ENCODE measurements at regions of chr7 and their contacts with region 1.

Region 1: DNA sequence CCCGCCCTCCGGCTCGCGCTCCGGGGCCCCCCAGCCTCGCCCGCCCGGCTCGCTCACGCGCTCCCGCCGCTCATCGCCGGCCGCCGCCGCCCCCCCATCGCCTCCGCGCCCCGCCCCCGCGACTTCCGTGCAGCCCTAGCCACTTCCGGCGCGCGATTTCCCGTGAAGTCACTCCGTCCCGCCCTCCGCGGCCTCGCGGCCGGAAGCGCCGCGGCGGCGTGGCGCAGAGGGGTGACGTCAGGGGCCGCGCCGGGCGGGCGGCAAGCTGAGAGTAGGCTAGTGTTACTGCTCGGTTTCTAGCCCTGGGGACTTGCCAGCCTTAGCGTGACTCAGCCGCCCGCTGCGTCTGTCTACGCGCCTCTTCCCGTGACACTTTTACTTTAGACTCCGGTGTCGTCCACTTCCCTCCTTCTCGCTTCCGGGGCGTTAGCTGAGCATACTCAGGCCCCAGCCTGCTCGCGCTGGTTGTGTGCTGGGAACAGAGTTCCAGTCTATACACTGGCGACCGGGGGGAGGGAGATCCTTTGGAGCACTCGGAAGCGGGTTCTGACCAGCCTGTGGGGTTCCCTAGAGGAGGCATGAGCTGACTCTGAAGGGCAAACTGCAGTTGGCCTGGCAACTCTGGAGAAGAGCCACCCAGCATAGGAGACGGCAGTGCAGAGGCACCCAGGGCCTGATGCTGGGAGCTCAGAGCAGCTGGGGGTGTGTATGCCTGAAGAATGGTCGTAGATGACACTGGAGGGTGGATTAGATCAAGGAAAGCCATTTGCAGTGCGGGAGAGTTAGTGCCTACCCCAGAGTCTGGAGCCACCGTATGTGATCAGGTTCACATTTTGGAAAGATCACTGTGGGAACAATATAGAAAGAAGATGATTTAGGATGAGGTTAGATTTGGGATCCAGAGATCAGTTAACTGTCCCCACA is at the start of gene PURB:
- DNase-seq: peak; percentile 79
- H3K4me3 ChIP-seq: peak within 1 kb of the TSS; percentile 87
- CTCF ChIP-seq: no peak

Region 2: GRCh38 chr7:44867073-44867995 is 18.3 kb before region 1 on chr7:
- CTCF ChIA-PET with region 1: interaction called, 16 read pairs
- POLR2A ChIA-PET with region 1: interaction called, 5 read pairs
- DNase-seq: peak; percentile 64
- H3K4me3 ChIP-seq: no peak overlapping the region
- CTCF ChIP-seq: no peak

Region 3: GRCh38 chr7:45052011-45052410 is 166.4 kb after region 1 on chr7:
- CTCF ChIA-PET with region 1: no interaction called
- POLR2A ChIA-PET with region 1: no interaction called
- DNase-seq: no peak
- H3K4me3 ChIP-seq: no peak overlapping the region
- CTCF ChIP-seq: no peak